Psoas muscle (tissue), 8 donors: ENCODE measurements at regions of chr12 and their contacts with region 1.

Region 1: DNA sequence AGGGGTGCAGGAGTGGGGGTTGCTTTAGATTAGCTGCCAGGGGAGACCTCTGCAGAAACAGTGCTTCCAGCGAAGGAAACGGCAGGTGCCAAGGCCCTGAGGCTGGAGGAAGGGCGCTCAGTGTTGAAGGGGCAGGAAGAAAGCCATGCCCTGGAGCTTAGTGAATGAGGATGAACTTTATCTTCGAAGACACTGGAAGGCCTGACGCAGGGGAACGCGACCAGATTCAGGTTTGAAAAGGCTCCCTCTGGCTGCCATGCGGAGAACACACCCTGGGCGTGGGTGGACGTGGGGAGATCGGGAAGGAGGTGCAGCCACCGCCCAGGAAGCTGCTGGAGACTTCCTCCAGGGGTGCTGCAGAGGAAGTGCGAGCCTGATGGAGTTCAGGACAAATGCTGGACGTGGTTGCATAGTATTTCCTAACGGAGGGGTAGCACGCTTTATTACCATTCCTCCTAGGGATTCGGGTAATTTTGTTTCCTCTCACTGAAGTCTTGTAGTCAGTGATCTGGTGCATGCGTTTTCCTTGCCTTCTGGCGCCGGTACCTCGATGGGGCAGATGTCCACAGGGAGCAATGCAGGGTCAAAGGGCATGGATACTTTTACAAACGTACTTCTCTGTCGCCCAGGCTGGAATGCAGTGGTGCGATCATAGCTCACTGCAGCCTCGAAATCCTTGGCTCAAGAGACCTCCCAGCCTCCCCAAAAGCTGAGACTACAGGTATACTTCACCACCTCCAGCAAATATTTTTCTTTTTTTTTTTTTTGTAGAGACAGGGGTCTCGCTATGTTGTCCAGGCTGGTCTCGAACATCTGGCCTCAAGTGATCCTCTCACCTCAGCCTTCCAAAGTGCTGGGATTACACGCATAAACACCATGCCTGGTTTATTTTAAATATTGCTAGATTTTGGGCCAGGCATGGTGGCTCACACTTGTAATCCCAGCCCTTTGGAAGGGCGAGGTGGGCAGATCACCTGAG is 26.4 kb upstream of the UBC start:
- DNase-seq: peak; percentile 92 to 95
- ATAC-seq: peak; percentile 67 to 84 (median 80)
- H3K4me3 ChIP-seq: peak overlapping the region; percentile 66
- H3K27ac ChIP-seq: peak overlapping the region; percentile 93
- H3K4me1 ChIP-seq: peaks cover 18% of the 10 kb centered on the region
- H3K27me3 ChIP-seq: no peaks in the 10 kb centered on the region
- CTCF ChIP-seq: peak; percentile 88

Region 2: GRCh38 chr12:124786061-124786964 is 154.5 kb before region 1 on chr12:
- intact Hi-C with region 1: no loop called
- DNase-seq: peak; percentile 80 to 81
- ATAC-seq: peak; percentile 95 to 98 (median 96)
- H3K4me3 ChIP-seq: peak overlapping the region; percentile 49
- H3K27ac ChIP-seq: no peak overlapping the region
- H3K4me1 ChIP-seq: peaks cover 8% of the 10 kb centered on the region
- H3K27me3 ChIP-seq: no peaks in the 10 kb centered on the region
- CTCF ChIP-seq: no peak

Region 3: DNA sequence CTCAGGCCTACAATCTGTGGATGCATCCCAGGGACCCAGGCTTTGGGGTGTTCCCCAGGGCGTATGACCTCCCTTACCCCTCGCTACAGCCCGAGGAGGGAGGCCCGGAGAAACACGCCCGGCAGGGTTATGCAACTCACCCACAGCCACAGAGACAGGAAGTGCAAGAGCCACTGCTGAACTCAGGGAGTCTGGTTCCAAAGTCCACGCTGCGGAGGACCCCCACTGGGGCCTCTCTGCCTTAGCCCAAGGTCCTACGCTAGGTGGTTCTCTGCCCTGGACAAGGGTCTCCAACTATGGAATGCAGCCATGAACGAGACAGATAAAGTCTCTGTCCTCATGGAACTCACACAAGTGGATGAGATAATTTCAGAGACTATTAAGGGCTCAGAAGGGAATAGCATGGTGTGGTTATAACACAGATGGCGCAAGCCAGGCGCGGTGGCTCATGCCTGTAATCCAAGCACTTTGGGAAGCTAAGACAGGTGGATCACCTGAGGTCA is 88.5 kb before region 1 on chr12:
- intact Hi-C with region 1: no loop called
- DNase-seq: peak in 1 of 2 donors; percentile 85
- ATAC-seq: peak in 1 of 4 donors; percentile 38
- H3K4me3 ChIP-seq: no peak overlapping the region
- H3K27ac ChIP-seq: no peak overlapping the region
- H3K4me1 ChIP-seq: peaks cover 31% of the 10 kb centered on the region
- H3K27me3 ChIP-seq: no peaks in the 10 kb centered on the region
- CTCF ChIP-seq: no peak

Region 4: DNA sequence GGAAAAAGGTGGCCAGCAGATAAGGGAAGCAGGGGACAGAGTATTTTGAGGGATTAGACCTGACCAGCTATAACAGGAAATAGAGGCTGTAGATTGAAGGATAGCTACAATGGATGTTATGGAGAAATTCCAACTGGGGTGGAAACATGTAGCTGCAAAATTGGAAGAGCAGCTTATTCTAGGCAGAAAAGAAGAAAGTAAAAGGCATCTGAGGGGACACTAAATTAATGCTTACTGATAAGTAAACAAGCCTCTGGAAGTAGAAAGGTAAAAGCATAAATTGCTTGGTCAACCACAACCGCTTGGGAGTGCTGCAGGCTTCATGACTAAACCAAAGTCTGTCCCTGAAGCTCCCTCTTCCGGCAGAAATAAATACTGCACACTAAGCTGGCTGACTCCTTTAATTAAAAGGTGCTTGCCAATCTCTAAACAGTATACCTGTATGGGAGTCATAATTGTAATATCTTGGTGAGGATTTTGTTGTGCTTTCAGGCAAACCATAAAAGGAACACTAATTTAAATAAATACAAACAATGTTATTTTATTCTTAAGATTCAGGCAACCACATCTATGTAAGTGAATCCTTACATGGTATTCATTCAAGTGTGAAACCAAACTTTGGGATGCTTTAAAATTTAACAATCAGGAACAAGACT is 34.1 kb before region 1 on chr12:
- intact Hi-C with region 1: loop called (anchors 2 to 5 kb)
- DNase-seq: peak; percentile 66 to 84
- ATAC-seq: peak; percentile 31 to 52 (median 46)
- H3K4me3 ChIP-seq: no peak overlapping the region
- H3K27ac ChIP-seq: peak overlapping the region; percentile 58
- H3K4me1 ChIP-seq: peaks cover 26% of the 10 kb centered on the region
- H3K27me3 ChIP-seq: no peaks in the 10 kb centered on the region
- CTCF ChIP-seq: peak; percentile 96

Region 5: GRCh38 chr12:124917135-124917840 is 23.6 kb before region 1 on chr12:
- intact Hi-C with region 1: loop called in 1 of 2 experiments (anchors 2 kb)
- DNase-seq: peak; percentile 96 to 99
- ATAC-seq: peak; percentile 71 to 81 (median 75)
- H3K4me3 ChIP-seq: peak overlapping the region; percentile 94
- H3K27ac ChIP-seq: peak overlapping the region; percentile 100
- H3K4me1 ChIP-seq: peaks cover 41% of the 10 kb centered on the region
- H3K27me3 ChIP-seq: no peaks in the 10 kb centered on the region
- CTCF ChIP-seq: no peak